K562 (cell line): ENCODE measurements at regions of chr17 and their contacts with region 1.

Region 1: DNA sequence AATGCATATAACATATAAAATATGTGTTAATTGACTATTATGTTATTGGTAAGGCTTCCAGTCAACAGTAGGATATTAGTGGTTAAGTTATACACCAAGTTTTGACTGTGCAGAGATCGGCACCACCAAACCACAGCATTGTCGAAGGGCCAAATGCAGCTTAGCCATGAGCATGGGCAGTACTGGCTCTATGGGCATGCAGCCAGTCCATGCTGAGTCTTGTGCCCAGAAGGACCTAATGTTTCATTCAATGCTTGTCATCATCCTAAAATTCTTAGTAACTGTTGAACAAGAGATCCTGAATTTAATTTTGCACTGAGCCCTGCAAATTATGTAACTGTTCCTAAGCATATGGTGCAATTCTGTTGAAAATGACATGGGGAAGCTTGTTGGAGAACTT is 233.4 kb upstream of the HS3ST3A1 start:
- DNase-seq: no peak
- ATAC-seq: no peak
- H3K4me3 ChIP-seq: no peak overlapping the region
- H3K27ac ChIP-seq: no peak overlapping the region
- H3K4me1 ChIP-seq: no peaks in the 10 kb centered on the region
- H3K27me3 ChIP-seq: no peaks in the 10 kb centered on the region
- CTCF ChIP-seq: no peak
- EP300 ChIP-seq: no peak
- POLR2A ChIP-seq: no peak
- RAD21 ChIP-seq: no peak

Region 2: DNA sequence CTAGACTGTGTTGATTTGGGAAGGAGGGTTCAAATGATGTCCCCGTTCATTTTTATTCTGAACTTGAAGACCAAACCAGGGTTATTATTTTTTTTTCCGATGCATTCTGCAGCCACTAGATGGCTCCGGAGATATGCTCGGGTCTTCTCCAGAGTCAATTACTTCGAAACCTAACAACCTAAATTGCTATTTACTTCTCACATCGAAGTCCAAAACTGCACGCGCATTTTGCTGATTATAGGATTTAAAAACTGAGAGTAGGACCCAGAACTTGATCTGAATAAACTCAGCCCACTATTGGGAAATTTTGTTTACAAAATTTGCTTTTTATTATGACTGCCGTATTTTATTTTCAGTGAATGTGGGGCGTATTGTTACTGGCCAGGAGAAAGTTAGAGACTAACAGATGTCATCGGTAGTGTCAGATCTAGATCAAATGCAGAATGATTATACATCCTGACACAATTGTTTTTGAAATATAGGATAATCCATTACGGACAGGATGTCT is 497.2 kb before region 1 on chr17:
- CTCF ChIA-PET with region 1: no interaction called
- POLR2A ChIA-PET with region 1: no interaction called
- in situ Hi-C with region 1: loop called (anchors 10 kb)
- intact Hi-C with region 1: no loop called
- DNase-seq: peak; percentile 11 to 65 (median 30)
- ATAC-seq: peak; percentile 72
- H3K4me3 ChIP-seq: peak overlapping the region; percentile 21; the same call in 1 of the 2 replicates
- H3K27ac ChIP-seq: peak overlapping the region; percentile 39; the same call in 1 of the 3 replicates
- H3K4me1 ChIP-seq: peaks cover 0 to 3% of the 10 kb centered on the region in 2 experiments; a peak in 3 of 5 replicates
- H3K27me3 ChIP-seq: no peaks in the 10 kb centered on the region
- CTCF ChIP-seq: peak; percentile 50 to 80 (median 55)
- EP300 ChIP-seq: no peak
- POLR2A ChIP-seq: no peak
- RAD21 ChIP-seq: peak; percentile 75 to 79